ENCODE measurements at regions of chr17 and their contacts with region 1.

Region 1: GRCh38 chr17:47315451-47316266 is 8.1 kb upstream of the EFCAB13 start:
- DNase-seq: no peak
- H3K4me3 ChIP-seq: no peak overlapping the region
- H3K27ac ChIP-seq: peak overlapping the region; percentile 62 to 81
- H3K4me1 ChIP-seq: peaks cover 0 to 49% (median 16%) of the 10 kb centered on the region in 4 donors
- H3K27me3 ChIP-seq: no peaks in the 10 kb centered on the region
- CTCF ChIP-seq: peak; percentile 75 to 89

Region 2: DNA sequence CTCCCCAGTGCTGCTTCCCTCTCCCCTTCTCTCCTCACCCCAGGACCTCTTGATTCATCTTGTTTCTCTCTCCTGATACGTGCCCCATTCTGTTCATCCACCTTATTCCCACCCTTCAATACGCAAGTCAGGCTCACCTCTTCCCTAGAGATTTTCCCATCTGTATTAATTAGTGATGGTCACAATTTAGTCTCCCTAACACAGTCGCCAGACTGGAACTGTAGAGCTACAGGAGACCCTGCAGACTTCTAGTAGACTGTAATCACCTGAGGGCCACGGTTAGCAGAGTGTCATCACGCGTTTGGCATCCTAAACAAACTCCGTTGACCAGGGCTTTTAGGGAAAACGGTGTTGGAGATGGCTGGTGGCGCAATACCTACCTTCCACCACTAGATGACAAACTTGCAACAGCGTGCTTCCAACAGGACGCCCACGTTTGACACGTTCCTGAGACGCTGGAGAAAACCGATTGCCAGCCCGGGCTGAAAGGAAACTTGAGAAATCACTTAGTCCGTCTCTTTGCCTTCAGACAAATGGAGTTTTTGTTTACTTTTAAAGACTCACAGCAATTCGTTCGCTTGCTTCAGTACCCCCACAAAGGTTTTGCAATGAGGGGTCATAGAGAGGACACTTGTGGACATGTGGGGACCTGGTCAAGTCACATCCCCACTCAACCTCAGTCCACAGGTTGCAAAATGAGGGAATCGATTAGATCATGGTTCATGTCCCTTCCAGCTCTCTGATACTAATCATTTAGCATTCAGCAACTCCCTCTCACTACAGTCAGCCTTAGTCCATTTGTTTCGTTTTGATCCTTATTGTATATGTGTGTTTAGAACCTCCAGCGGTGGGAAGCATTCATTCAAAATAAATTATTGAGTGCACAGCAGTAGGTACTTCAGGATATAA is 85.9 kb before region 1 on chr17:
- intact Hi-C with region 1: loop called (anchors 2 kb)
- DNase-seq: peak; percentile 90 to 93
- H3K4me3 ChIP-seq: peak overlapping the region; percentile 17 to 37
- H3K27ac ChIP-seq: peak overlapping the region; percentile 80 to 93
- H3K4me1 ChIP-seq: peaks cover 0 to 36% (median 24%) of the 10 kb centered on the region in 4 donors
- H3K27me3 ChIP-seq: no peaks in the 10 kb centered on the region
- CTCF ChIP-seq: peak; percentile 98 to 99

Region 3: DNA sequence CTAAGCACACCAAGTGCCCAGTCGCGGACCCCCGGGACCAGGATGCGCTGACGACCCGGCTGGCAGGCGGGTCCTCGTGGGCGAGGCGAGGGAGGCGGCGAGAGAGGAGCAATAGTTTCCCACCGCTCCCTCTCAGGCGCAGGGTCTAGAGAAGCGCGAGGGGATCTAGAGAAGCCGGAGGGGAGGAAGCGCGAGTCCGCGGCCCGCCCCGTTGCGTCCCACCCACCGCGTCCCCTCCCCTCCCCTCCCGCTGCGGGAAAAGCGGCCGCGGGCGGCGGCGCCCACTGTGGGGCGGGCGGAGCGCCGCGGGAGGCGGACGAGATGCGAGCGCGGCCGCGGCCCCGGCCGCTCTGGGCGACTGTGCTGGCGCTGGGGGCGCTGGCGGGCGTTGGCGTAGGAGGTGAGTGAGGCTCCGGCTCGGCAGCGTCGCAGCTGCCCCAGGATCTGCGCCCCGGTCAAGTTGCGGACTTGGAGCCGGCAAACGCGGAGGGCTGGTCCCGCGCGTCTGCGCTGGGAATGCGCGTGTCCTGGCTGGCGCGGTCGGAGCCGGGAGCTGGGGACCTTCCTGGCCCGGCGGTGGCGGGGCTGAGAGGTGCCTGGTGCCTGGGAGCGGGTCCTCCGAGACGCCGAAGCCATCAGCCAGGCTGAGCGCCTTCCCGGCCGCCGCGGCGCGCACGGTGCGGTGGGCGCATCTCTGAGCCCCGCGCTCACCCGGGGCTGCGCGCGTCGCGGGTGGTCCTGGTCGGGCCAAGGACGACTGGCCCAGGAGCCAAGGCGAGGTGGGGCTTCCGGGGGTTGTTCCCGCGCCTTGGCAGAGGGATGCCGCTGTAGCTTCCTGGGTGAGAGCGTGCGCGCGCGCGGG is 61.9 kb before region 1 on chr17 and contains the start of gene ITGB3:
- intact Hi-C with region 1: no loop called
- DNase-seq: peak; percentile 75 to 89
- H3K4me3 ChIP-seq: peak within 1 kb of the TSS; percentile 82 to 96
- H3K27ac ChIP-seq: peak within 1 kb of the TSS; percentile 95 to 96
- H3K4me1 ChIP-seq: peaks cover 0 to 51% (median 36%) of the 10 kb centered on the region in 4 donors
- H3K27me3 ChIP-seq: no peaks in the 10 kb centered on the region
- CTCF ChIP-seq: peak; percentile 48 to 51

Region 4: GRCh38 chr17:47280072-47280811 is 35.4 kb before region 1 on chr17:
- intact Hi-C with region 1: no loop called
- DNase-seq: peak in 1 of 2 donors; percentile 74
- H3K4me3 ChIP-seq: no peak overlapping the region
- H3K27ac ChIP-seq: peak overlapping the region; percentile 85 to 92
- H3K4me1 ChIP-seq: peaks cover 5 to 87% (median 57%) of the 10 kb centered on the region in 4 donors
- H3K27me3 ChIP-seq: no peaks in the 10 kb centered on the region
- CTCF ChIP-seq: no peak

Region 5: DNA sequence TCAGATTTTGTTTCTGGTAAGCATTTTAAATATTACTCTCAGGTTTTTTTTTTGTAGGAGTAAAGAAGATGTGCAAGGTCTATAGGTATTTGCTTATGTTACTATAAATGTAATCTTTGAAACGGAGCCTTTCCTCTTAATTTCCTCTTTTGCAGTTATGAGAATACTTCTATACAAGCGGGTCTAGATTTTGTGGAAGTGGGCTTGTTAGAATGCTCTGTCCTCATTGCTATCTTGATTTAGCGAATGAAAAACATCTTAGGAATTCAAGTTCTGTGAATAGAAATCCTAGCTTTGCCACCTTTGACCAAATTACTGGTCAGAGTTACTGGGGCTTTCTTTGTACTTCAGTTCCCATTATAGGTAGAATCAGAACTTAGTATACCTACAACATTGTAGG is 88.3 kb after region 1 on chr17:
- intact Hi-C with region 1: no loop called
- DNase-seq: no peak
- H3K4me3 ChIP-seq: no peak overlapping the region
- H3K27ac ChIP-seq: no peak overlapping the region
- H3K4me1 ChIP-seq: no peaks in the 10 kb centered on the region
- H3K27me3 ChIP-seq: no peaks in the 10 kb centered on the region
- CTCF ChIP-seq: no peak